Panc1 (cell line): ENCODE measurements at regions of chr6 and their contacts with region 1.

Region 1: GRCh38 chr6:101393251-101393828 is at the start of gene GRIK2:
- DNase-seq: no peak
- ATAC-seq: peak; percentile 91
- H3K4me3 ChIP-seq: peak within 1 kb of the TSS; percentile 58 to 71
- H3K27ac ChIP-seq: no peak within 1 kb of the TSS; the same call in 1 of the 2 replicates
- H3K4me1 ChIP-seq: peaks cover 7% of the 10 kb centered on the region
- H3K27me3 ChIP-seq: peaks cover 6% of the 10 kb centered on the region; the same call in 1 of the 2 replicates
- CTCF ChIP-seq: peak; percentile 57
- total RNA-seq, gene GRIK2: 6.6 TPM

Region 2: GRCh38 chr6:99885051-99885450 is 1508.3 kb before region 1 on chr6:
- CTCF ChIA-PET with region 1: no interaction called
- POLR2A ChIA-PET with region 1: no interaction called
- in situ Hi-C with region 1: no loop called
- intact Hi-C with region 1: no loop called
- DNase-seq: no peak
- ATAC-seq: no peak
- H3K4me3 ChIP-seq: no peak overlapping the region
- H3K27ac ChIP-seq: no peak overlapping the region
- H3K4me1 ChIP-seq: no peaks in the 10 kb centered on the region
- H3K27me3 ChIP-seq: no peaks in the 10 kb centered on the region; the same call in 1 of the 2 replicates
- CTCF ChIP-seq: no peak

Region 3: DNA sequence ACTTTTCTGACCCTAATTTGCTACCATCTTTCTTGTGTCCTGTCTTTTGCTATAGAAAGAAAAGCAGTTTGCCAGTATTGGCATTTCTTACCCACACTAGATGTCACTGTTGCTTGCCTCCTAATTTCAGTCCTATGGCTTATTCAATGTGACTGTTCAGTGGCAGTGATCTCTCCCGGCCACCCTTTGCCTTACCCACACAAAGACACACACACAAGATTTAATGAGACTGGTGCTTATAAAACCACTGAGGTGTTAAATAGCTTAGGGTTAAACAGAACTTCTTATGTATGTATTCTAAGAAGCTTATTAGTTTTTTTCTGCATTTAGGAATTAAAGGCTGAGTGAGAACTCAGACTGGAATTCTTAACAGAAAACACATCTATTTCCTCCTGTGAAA is 278.6 kb before region 1 on chr6:
- CTCF ChIA-PET with region 1: interaction called, 4 read pairs
- POLR2A ChIA-PET with region 1: no interaction called
- in situ Hi-C with region 1: no loop called
- intact Hi-C with region 1: loop called (anchors 10 kb)
- DNase-seq: peak; percentile 28
- ATAC-seq: peak; percentile 91
- H3K4me3 ChIP-seq: no peak overlapping the region
- H3K27ac ChIP-seq: peak overlapping the region; percentile 42; the same call in 1 of the 2 replicates
- H3K4me1 ChIP-seq: peaks cover 5% of the 10 kb centered on the region; the same call in 1 of the 2 replicates
- H3K27me3 ChIP-seq: no peaks in the 10 kb centered on the region
- CTCF ChIP-seq: peak; percentile 78

Region 4: DNA sequence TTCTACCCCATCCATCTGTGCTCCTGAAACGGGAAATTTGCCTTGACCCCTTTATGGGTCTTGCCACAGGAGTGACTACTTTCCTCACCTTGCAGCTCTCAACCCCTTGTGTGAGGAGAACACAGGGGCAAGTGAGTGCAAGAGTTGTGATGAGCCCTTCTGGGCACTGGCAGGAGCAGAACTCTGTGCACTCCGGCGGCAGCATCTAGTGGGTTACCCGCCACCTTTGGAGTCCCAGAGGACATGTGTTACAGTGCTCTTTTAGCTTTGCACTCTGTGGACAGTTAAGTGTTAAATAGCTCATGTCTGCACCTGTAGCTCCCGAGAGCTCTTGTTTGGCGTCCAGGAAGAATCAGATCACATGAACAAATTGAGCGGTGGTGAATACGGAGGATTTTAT is 940.4 kb after region 1 on chr6:
- CTCF ChIA-PET with region 1: no interaction called
- POLR2A ChIA-PET with region 1: no interaction called
- in situ Hi-C with region 1: no loop called
- intact Hi-C with region 1: loop called (anchors 5 kb)
- DNase-seq: no peak
- ATAC-seq: no peak
- H3K4me3 ChIP-seq: no peak overlapping the region
- H3K27ac ChIP-seq: no peak overlapping the region
- H3K4me1 ChIP-seq: no peaks in the 10 kb centered on the region
- H3K27me3 ChIP-seq: no peaks in the 10 kb centered on the region
- CTCF ChIP-seq: no peak